ENCODE measurements at regions of chr11 and their contacts with region 1.

Region 1: DNA sequence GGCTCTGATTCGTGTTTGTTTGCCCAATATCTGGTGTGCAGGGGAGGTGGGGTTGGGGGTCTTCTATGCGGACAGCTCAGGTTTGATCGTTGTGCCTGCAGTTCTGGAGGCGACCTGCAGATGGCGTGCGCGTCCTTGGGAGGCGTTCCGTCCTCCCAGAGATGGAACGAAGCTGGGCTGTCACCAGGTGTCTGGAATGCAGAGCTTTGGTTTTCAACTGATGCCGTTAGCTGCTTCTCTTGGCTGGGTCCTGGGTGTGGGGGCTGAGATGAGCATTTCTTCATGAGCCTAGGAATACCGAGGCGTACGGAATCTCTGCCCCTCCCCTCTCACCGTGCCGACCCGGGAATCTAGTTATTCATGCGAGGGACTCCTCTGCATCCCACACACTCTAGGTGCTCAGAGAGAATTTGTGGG is 98.6 kb downstream of the CEP164 start:
- DNase-seq: peak; percentile 86
- H3K4me3 ChIP-seq: peak overlapping the region in 1 of 8 donors; percentile 31
- H3K27ac ChIP-seq: no peak overlapping the region
- H3K4me1 ChIP-seq: peaks cover 0 to 8% (median 3%) of the 10 kb centered on the region in 6 donors
- H3K27me3 ChIP-seq: peaks cover 0 to 10% (median 0%) of the 10 kb centered on the region in 7 donors
- CTCF ChIP-seq: peak; percentile 64 to 90 (median 85)
- POLR2A ChIP-seq: no peak

Region 2: GRCh38 chr11:117366248-117366647 is 60.0 kb before region 1 on chr11:
- intact Hi-C with region 1: no loop called
- DNase-seq: no peak
- H3K4me3 ChIP-seq: no peak overlapping the region
- H3K27ac ChIP-seq: no peak overlapping the region
- H3K4me1 ChIP-seq: no peaks in the 10 kb centered on the region
- H3K27me3 ChIP-seq: no peaks in the 10 kb centered on the region
- CTCF ChIP-seq: no peak
- POLR2A ChIP-seq: no peak

Region 3: DNA sequence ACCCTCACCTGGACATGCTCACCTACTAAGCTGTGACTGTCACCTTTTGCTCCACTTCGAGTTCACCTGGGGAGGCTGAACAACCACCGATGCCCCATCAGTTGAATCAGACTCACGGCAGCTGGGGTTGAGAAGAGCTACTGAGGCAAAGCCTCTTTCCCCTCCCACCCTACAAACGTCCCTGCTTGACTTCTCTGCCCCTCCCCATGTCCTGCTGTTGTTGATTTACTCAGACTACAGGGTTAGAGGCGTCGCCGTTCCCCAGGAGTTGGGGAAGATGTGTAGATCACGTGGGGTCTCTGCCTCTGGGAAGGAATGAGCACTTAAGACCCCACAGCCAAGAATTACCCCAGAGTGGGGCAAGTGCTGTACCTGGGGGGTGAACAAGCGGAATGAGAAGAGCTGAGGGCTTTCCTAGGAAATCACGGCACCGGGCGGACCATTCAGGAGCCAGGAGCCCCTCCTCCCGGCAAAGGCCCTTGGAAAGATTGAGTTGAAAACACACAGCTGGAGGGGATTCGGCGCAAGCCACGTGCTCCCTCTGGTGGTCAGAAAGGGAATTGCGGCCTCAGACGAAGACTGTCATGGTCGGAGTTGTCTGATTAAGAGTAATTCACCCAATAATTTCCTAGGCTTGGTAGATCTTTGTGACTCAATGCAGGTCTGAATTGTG is 391.2 kb after region 1 on chr11:
- intact Hi-C with region 1: loop called (anchors 5 kb)
- DNase-seq: peak; percentile 94
- H3K4me3 ChIP-seq: peak overlapping the region in 1 of 8 donors; percentile 55
- H3K27ac ChIP-seq: peak overlapping the region; percentile 40 to 91 (median 82)
- H3K4me1 ChIP-seq: peaks cover 52 to 77% (median 66%) of the 10 kb centered on the region in 6 donors
- H3K27me3 ChIP-seq: peaks cover 0 to 10% (median 0%) of the 10 kb centered on the region in 7 donors
- CTCF ChIP-seq: peak; percentile 97 to 100 (median 99)
- POLR2A ChIP-seq: no peak